Naive thymus-derived CD4-positive, alpha-beta T cell (primary cell): ENCODE measurements at regions of chr10 and their contacts with region 1.

Region 1: DNA sequence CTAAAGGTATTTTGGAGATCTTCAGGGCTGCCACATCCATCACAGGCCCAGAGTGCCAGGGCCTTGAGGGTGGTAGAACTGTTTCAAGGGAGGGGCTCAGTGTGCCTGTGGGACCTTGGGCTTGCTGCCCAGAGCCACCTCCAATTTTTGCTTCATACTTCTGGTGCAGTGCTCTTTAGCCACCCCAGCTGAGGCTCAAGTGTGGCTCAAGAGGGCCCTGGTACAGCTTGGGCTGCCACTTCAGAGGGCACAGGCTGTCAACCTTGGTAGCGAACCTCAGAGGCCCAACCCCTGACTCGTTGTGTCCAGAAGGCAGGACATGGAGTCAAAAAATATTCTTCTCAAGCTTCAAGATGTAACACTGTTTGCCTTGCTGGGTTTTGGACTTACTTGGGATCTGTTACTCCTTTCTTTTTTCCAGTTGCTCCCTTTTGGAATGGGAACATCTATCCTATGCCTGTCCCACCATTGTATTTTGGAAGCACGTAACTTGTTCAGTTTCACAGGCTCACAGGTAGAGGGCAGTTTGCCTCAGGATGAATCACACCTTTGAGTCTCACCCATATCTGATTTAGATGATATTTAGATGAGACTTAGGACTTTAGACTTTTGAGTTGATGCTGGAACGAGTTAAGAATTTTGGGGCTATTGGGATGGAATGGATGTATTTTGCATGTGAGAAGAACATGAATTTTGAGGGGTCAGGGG is 224.8 kb downstream of the RPS24 start:
- DNase-seq: peak in 1 of 9 donors; percentile 12
- ATAC-seq: no peak
- H3K4me3 ChIP-seq: no peak overlapping the region
- H3K4me3 Mint-ChIP-seq: no peak overlapping the region
- H3K27ac ChIP-seq: no peak overlapping the region
- H3K27ac Mint-ChIP-seq: no peak overlapping the region
- H3K4me1 ChIP-seq: no peaks in the 10 kb centered on the region
- H3K4me1 Mint-ChIP-seq: peaks cover 0 to 5% (median 0%) of the 10 kb centered on the region in 7 donors
- H3K27me3 ChIP-seq: no peaks in the 10 kb centered on the region
- H3K27me3 Mint-ChIP-seq: peaks cover 0 to 3% (median 0%) of the 10 kb centered on the region in 5 donors

Region 2: GRCh38 chr10:78236416-78237015 is 22.0 kb before region 1 on chr10:
- CTCF ChIA-PET with region 1: no interaction called
- POLR2A ChIA-PET with region 1: no interaction called
- intact Hi-C with region 1: no loop called
- DNase-seq: no peak
- ATAC-seq: no peak
- H3K4me3 ChIP-seq: no peak overlapping the region
- H3K4me3 Mint-ChIP-seq: no peak overlapping the region
- H3K27ac ChIP-seq: no peak overlapping the region
- H3K27ac Mint-ChIP-seq: no peak overlapping the region
- H3K4me1 ChIP-seq: no peaks in the 10 kb centered on the region
- H3K4me1 Mint-ChIP-seq: no peaks in the 10 kb centered on the region
- H3K27me3 ChIP-seq: no peaks in the 10 kb centered on the region
- H3K27me3 Mint-ChIP-seq: peaks cover 0 to 19% (median 7%) of the 10 kb centered on the region in 5 donors

Region 3: DNA sequence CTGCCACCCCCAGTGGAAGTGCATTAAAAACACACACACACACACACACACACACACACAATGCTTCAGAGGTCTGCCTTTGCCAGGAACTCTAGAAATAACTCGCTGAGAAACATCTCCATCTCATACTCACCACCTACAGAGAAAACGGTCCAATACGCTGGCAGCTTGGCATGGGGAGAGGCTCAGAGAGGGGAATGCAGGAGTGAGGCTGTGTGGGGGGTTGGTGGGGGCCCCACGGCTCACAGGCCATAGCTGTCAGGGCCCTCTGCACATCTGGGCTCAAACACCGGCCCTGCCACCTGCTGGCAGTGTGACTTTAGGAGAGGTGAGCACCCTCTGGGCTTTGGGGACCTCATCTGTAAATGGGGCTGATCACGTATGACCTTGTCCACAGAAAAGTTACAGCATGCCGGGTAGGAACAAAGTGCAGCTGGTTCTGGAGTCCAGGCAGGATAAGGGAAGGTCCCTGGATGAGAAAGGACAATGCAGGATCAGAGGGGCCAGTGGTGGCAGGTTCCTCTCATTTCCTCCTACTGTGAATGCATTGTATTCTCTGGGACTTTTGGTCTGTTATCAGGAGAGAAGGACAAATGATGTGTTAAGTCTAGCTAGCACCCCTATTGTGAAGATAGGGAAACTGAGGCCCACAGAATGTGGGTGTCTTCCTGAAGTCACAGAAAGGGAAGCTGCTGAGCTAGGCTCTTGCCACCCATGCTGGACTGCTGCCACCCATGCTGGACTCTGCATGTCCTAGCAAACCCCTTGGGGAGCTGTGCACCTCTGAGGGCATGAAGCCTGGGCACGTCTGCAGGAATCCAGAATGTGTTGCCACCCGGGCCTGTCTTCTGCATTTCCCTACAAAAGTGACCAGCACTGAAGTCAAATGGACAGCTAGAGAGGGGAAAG is 179.8 kb after region 1 on chr10:
- CTCF ChIA-PET with region 1: no interaction called
- POLR2A ChIA-PET with region 1: no interaction called
- intact Hi-C with region 1: loop called in 1 of 2 experiments (anchors 2 kb)
- DNase-seq: peak in 3 of 9 donors; percentile 3 to 12 (median 6)
- ATAC-seq: no peak
- H3K4me3 ChIP-seq: no peak overlapping the region
- H3K4me3 Mint-ChIP-seq: peak overlapping the region in 1 of 10 donors; percentile 51
- H3K27ac ChIP-seq: no peak overlapping the region
- H3K27ac Mint-ChIP-seq: peak overlapping the region in 1 of 9 donors; percentile 12
- H3K4me1 ChIP-seq: no peaks in the 10 kb centered on the region
- H3K4me1 Mint-ChIP-seq: peaks cover 0 to 2% (median 0%) of the 10 kb centered on the region in 7 donors
- H3K27me3 ChIP-seq: no peaks in the 10 kb centered on the region
- H3K27me3 Mint-ChIP-seq: peaks cover 0 to 8% (median 4%) of the 10 kb centered on the region in 5 donors